Activated CD4-positive, alpha-beta T cell treated with anti-CD3 and anti-CD28 coated beads, Interleukin-2, amount 10 ng/mL, durations not matched to agents 7 days and 5 days (primary cell): ENCODE measurements at regions of chr7 and their contacts with region 1.

Region 1: GRCh38 chr7:117072620-117073118 is 119.4 kb downstream of the ST7 start:
- DNase-seq: no peak
- H3K4me3 Mint-ChIP-seq: no peak overlapping the region
- H3K27ac Mint-ChIP-seq: no peak overlapping the region
- H3K4me1 Mint-ChIP-seq: peaks cover 12% of the 10 kb centered on the region
- H3K27me3 Mint-ChIP-seq: no peaks in the 10 kb centered on the region

Region 2: DNA sequence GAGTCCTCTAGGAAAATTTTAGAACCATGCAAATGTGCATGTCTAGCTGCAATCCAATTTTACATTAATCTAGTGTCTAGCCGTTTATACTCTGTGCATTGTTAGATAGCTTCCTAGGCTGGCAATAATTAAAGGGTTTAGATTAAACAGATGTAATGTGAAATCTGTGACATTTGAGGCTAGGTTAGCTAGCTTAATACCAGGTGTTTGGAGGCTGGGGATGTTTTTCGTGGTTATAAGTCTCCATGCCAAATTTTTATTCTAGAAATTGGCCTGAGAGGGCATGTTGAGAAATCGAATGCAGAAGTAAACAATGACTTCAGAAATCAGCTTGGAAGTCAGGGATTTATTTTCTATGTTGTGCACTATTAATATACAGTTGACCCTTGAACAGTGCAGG is 25.2 kb before region 1 on chr7:
- CTCF ChIA-PET with region 1: no interaction called
- POLR2A ChIA-PET with region 1: interaction called, 10 read pairs
- DNase-seq: no peak
- H3K4me3 Mint-ChIP-seq: no peak overlapping the region
- H3K27ac Mint-ChIP-seq: no peak overlapping the region
- H3K4me1 Mint-ChIP-seq: peaks cover 27% of the 10 kb centered on the region
- H3K27me3 Mint-ChIP-seq: peaks cover 15% of the 10 kb centered on the region

Region 3: GRCh38 chr7:117086788-117087187 is 14.1 kb after region 1 on chr7:
- CTCF ChIA-PET with region 1: no interaction called
- POLR2A ChIA-PET with region 1: no interaction called
- DNase-seq: no peak
- H3K4me3 Mint-ChIP-seq: no peak overlapping the region
- H3K27ac Mint-ChIP-seq: no peak overlapping the region
- H3K4me1 Mint-ChIP-seq: peaks cover 27% of the 10 kb centered on the region
- H3K27me3 Mint-ChIP-seq: peaks cover 2% of the 10 kb centered on the region